H1 (cell line): ENCODE measurements at regions of chr11 and their contacts with region 1.

Region 1: GRCh38 chr11:93875637-93876036 is 25.2 kb upstream of the VSTM5 start:
- DNase-seq: no peak
- H3K4me3 ChIP-seq: no peak overlapping the region
- H3K27ac ChIP-seq: no peak overlapping the region
- H3K4me1 ChIP-seq: peaks cover 3 to 11% (median 8%) of the 10 kb centered on the region in 4 experiments; a peak in 5 of 7 replicates
- H3K27me3 ChIP-seq: no peaks in the 10 kb centered on the region
- CTCF ChIP-seq: no peak
- EP300 ChIP-seq: no peak
- POLR2A ChIP-seq: no peak
- RAD21 ChIP-seq: no peak

Region 2: GRCh38 chr11:93861808-93862207 is 13.8 kb before region 1 on chr11:
- CTCF ChIA-PET with region 1: interaction called, 19 read pairs
- POLR2A ChIA-PET with region 1: no interaction called
- DNase-seq: no peak
- H3K4me3 ChIP-seq: no peak overlapping the region
- H3K27ac ChIP-seq: no peak overlapping the region
- H3K4me1 ChIP-seq: peaks cover 0 to 2% (median under 1%) of the 10 kb centered on the region in 4 experiments; a peak in 2 of 7 replicates
- H3K27me3 ChIP-seq: no peaks in the 10 kb centered on the region
- CTCF ChIP-seq: no peak
- EP300 ChIP-seq: no peak
- POLR2A ChIP-seq: no peak
- RAD21 ChIP-seq: no peak